CD4-positive, alpha-beta T cell (primary cell): ENCODE measurements at regions of chr5 and their contacts with region 1.

Region 1: DNA sequence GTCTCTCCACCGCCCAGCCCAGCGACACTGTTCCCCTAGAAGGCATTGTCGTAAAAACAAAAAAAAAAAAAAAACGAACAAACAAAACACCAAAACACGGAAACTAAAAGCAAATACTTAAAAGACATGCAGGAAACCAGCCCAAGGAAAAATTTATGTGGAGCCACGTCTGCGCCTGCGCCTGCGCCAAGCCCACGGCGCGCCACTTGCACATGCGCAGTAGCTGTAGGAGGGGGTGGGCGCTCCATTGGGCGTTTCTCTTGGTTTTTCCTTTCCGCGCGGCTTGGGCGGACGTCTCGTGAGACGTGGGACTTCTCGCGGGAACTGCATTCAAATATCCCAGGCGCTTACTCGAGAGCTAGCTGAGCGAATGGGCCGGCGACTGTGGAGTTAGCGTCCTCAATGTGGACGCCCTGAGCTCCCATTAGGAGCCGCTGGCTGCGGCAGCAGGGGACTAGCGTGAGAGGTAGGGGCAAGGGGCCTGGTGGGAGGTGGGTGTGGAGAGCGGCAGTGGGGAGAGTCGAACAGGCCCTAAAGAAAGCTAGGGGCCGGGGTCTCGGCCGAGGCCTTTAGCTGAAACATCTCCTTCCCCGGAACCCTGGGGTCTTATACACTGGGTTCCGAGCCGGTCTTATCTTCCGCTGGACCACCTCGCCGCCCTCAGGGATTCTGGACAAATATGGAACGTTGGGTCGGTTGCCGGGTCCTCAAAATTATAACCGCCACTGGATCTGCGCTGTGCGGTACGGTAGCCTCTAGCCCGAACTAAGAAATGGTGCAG is at the start of gene SPDL1:
- DNase-seq: peak; percentile 89 to 98 (median 91)
- ATAC-seq: peak; percentile 96
- H3K4me3 ChIP-seq: peak within 1 kb of the TSS; percentile 76
- H3K4me3 Mint-ChIP-seq: peak within 1 kb of the TSS; percentile 100
- H3K27ac ChIP-seq: peak within 1 kb of the TSS; percentile 43 to 65
- H3K27ac Mint-ChIP-seq: peak within 1 kb of the TSS; percentile 88
- H3K4me1 ChIP-seq: peaks cover 6% of the 10 kb centered on the region
- H3K4me1 Mint-ChIP-seq: peaks cover 47% of the 10 kb centered on the region
- H3K27me3 ChIP-seq: no peaks in the 10 kb centered on the region
- H3K27me3 Mint-ChIP-seq: no peaks in the 10 kb centered on the region
- CTCF ChIP-seq: no peak
- total RNA-seq, gene SPDL1: 4.3 to 5.6 TPM

Region 2: DNA sequence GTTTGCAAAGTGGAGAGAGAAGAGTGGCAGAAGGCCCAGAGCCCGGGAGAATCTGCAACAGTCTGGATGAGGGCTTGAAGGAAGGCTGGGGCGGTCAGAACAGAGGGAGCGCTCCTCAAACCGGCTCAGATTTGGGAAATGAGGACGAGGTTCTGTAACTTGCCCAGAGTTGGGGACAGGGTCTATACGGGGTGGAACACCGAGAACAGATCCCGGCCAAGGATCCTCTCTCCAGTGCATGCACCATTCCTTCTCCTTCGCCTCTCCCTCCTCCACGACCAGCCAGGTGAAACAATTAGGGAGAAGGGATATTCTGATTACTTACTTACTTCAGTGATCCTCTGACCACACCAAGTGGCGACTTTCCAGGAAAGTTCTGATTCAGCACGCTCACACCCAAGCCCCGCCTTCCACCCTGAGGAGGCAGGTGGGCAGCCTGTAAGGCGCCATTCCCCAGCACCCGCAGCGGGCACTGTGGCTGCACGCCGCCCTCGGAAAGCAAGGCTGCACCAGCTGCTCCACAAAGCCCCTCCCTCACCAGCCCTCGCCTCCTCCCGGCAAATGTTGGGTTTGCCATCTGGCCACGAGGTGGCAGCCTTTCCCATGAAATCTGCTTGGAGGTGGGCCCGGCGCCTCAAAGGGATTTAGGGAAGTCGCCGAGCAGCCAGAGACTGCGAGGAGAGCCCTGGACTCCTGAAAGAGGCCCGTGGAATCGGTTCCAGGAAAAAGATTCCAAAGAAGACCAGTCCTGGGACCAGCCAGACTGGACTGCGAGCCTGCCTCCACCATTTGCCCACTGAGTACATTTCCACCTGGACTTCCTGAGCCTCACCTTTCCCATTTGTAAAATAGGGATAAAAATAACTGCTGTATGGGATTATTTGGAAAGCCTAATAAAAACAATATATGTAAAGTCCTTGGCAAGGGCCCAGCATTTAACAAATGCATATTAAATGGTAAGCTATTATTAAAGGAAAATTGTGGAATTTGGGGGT is 1314.4 kb before region 1 on chr5:
- CTCF ChIA-PET with region 1: no interaction called
- POLR2A ChIA-PET with region 1: no interaction called
- intact Hi-C with region 1: loop called in 1 of 2 experiments (anchors 5 kb)
- DNase-seq: peak; percentile 36 to 84 (median 66)
- ATAC-seq: peak; percentile 83
- H3K4me3 ChIP-seq: peak overlapping the region; percentile 24
- H3K4me3 Mint-ChIP-seq: peak overlapping the region; percentile 55
- H3K27ac ChIP-seq: no peak overlapping the region
- H3K27ac Mint-ChIP-seq: no peak overlapping the region
- H3K4me1 ChIP-seq: peaks cover 9% of the 10 kb centered on the region
- H3K4me1 Mint-ChIP-seq: peaks cover 12% of the 10 kb centered on the region
- H3K27me3 ChIP-seq: peaks cover 2 to 5% of the 10 kb centered on the region in 2 experiments
- H3K27me3 Mint-ChIP-seq: peaks cover 22% of the 10 kb centered on the region
- CTCF ChIP-seq: peak; percentile 84

Region 3: GRCh38 chr5:168486136-168486879 is 1097.3 kb before region 1 on chr5 and contains the start of gene RARS1:
- CTCF ChIA-PET with region 1: no interaction called
- POLR2A ChIA-PET with region 1: no interaction called
- intact Hi-C with region 1: loop called in 1 of 2 experiments (anchors 5 kb)
- DNase-seq: peak; percentile 75 to 94 (median 83)
- ATAC-seq: peak; percentile 81
- H3K4me3 ChIP-seq: peak within 1 kb of the TSS; percentile 76
- H3K4me3 Mint-ChIP-seq: peak within 1 kb of the TSS; percentile 97
- H3K27ac ChIP-seq: peak within 1 kb of the TSS; percentile 54 to 64
- H3K27ac Mint-ChIP-seq: peak within 1 kb of the TSS; percentile 83
- H3K4me1 ChIP-seq: peaks cover 15% of the 10 kb centered on the region
- H3K4me1 Mint-ChIP-seq: peaks cover 39% of the 10 kb centered on the region
- H3K27me3 ChIP-seq: no peaks in the 10 kb centered on the region
- H3K27me3 Mint-ChIP-seq: no peaks in the 10 kb centered on the region
- CTCF ChIP-seq: peak; percentile 96
- total RNA-seq, gene RARS1: 67.0 to 67.7 TPM

Region 4: DNA sequence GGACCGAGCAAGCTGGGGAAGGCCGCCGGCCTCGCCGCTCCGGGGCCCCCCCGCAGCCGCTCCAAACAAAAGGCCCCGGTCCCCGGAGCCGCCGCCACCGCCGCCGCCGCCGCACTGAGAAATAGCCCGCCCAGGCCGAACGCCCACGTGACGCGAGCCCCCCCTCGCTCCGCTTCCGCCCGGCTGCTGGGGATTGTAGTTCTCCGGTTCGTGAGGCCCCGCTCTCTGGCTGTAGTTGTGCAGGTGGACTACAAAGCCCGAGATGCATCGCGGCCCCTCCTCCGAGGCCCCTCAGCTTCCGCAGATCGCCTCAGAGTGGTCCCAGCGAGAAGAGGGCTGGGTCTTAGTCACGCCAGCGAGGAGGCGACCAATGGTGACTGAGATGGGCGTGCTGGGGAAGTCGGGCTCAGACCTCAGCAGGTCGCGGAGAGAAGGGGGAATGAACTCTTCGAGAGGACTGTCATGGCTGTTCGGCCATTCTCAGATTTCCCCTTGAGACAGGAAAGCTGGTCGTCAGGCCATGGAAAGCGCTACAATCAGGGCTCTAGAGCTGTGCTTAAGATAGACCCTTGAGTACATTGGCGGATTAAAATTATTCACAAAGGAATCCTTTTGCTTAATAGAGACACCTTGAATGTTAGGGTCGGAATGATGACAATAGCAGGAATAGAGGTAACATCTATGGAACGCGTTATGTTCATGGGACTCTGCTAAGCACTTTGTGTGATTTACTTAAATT is 1004.0 kb before region 1 on chr5:
- CTCF ChIA-PET with region 1: no interaction called
- POLR2A ChIA-PET with region 1: interaction called, 7 read pairs
- intact Hi-C with region 1: loop called (anchors 5 to 10 kb)
- DNase-seq: peak; percentile 90 to 99 (median 95)
- ATAC-seq: peak; percentile 96
- H3K4me3 ChIP-seq: peak overlapping the region; percentile 92
- H3K4me3 Mint-ChIP-seq: peak overlapping the region; percentile 92
- H3K27ac ChIP-seq: peak overlapping the region; percentile 77 to 86
- H3K27ac Mint-ChIP-seq: peak overlapping the region; percentile 89
- H3K4me1 ChIP-seq: peaks cover 28% of the 10 kb centered on the region
- H3K4me1 Mint-ChIP-seq: peaks cover 44% of the 10 kb centered on the region
- H3K27me3 ChIP-seq: no peaks in the 10 kb centered on the region
- H3K27me3 Mint-ChIP-seq: peaks cover 5% of the 10 kb centered on the region
- CTCF ChIP-seq: no peak

Region 5: DNA sequence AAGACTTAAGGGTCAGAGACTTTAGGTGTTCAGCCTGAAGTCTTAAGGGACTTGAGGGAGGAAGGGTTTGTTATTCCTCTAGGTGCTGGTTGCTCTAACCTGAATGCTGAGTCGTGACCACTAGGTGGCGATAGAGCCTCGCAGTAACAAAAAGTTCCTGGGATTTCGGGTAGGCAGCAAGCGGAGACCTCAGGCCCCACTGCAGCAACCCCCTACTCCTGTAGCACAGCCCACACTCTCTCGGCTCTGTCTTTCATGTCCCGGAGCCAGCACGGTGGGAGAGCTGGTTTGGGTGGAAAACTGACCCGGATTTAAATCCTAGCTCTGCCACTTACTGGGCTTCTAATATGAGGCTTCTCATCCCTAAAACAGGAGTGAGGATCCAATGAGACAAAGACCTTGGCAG is 904.1 kb before region 1 on chr5:
- CTCF ChIA-PET with region 1: no interaction called
- POLR2A ChIA-PET with region 1: no interaction called
- intact Hi-C with region 1: loop called (anchors 2 kb)
- DNase-seq: peak; percentile 23 to 73 (median 48)
- ATAC-seq: no peak
- H3K4me3 ChIP-seq: no peak overlapping the region
- H3K4me3 Mint-ChIP-seq: no peak overlapping the region
- H3K27ac ChIP-seq: no peak overlapping the region
- H3K27ac Mint-ChIP-seq: no peak overlapping the region
- H3K4me1 ChIP-seq: peaks cover 12% of the 10 kb centered on the region
- H3K4me1 Mint-ChIP-seq: peaks cover 14% of the 10 kb centered on the region
- H3K27me3 ChIP-seq: no peaks in the 10 kb centered on the region
- H3K27me3 Mint-ChIP-seq: no peaks in the 10 kb centered on the region
- CTCF ChIP-seq: peak; percentile 87

Region 6: GRCh38 chr5:169595172-169595820 is 11.7 kb after region 1 on chr5:
- CTCF ChIA-PET with region 1: no interaction called
- POLR2A ChIA-PET with region 1: no interaction called
- intact Hi-C with region 1: no loop called
- DNase-seq: no peak
- ATAC-seq: no peak
- H3K4me3 ChIP-seq: no peak overlapping the region
- H3K4me3 Mint-ChIP-seq: no peak overlapping the region
- H3K27ac ChIP-seq: no peak overlapping the region
- H3K27ac Mint-ChIP-seq: no peak overlapping the region
- H3K4me1 ChIP-seq: no peaks in the 10 kb centered on the region
- H3K4me1 Mint-ChIP-seq: no peaks in the 10 kb centered on the region
- H3K27me3 ChIP-seq: no peaks in the 10 kb centered on the region
- H3K27me3 Mint-ChIP-seq: no peaks in the 10 kb centered on the region
- CTCF ChIP-seq: no peak

Region 7: GRCh38 chr5:169637085-169637548 is 53.5 kb after region 1 on chr5 and contains the start of gene DOCK2:
- CTCF ChIA-PET with region 1: interaction called, 3 read pairs
- POLR2A ChIA-PET with region 1: interaction called, 36 read pairs
- intact Hi-C with region 1: loop called (anchors 1 to 2 kb)
- DNase-seq: peak; percentile 26 to 80 (median 62)
- ATAC-seq: peak; percentile 75
- H3K4me3 ChIP-seq: peak within 1 kb of the TSS; percentile 89
- H3K4me3 Mint-ChIP-seq: peak within 1 kb of the TSS; percentile 95
- H3K27ac ChIP-seq: peak within 1 kb of the TSS; percentile 80 to 87
- H3K27ac Mint-ChIP-seq: peak within 1 kb of the TSS; percentile 97
- H3K4me1 ChIP-seq: peaks cover 47% of the 10 kb centered on the region
- H3K4me1 Mint-ChIP-seq: peaks cover 60% of the 10 kb centered on the region
- H3K27me3 ChIP-seq: no peaks in the 10 kb centered on the region
- H3K27me3 Mint-ChIP-seq: no peaks in the 10 kb centered on the region
- CTCF ChIP-seq: no peak
- total RNA-seq, gene DOCK2: 220 to 229 TPM

Region 8: GRCh38 chr5:169650701-169651331 is 67.2 kb after region 1 on chr5:
- CTCF ChIA-PET with region 1: no interaction called
- POLR2A ChIA-PET with region 1: interaction called, 3 read pairs
- intact Hi-C with region 1: loop called in 1 of 2 experiments (anchors 5 kb)
- DNase-seq: peak in 3 of 14 experiments; percentile 64 to 70 (median 68)
- ATAC-seq: peak; percentile 58
- H3K4me3 ChIP-seq: no peak overlapping the region
- H3K4me3 Mint-ChIP-seq: peak overlapping the region; percentile 72
- H3K27ac ChIP-seq: peak overlapping the region; percentile 17 to 73
- H3K27ac Mint-ChIP-seq: peak overlapping the region; percentile 81
- H3K4me1 ChIP-seq: peaks cover 86% of the 10 kb centered on the region
- H3K4me1 Mint-ChIP-seq: peaks cover 99% of the 10 kb centered on the region
- H3K27me3 ChIP-seq: no peaks in the 10 kb centered on the region
- H3K27me3 Mint-ChIP-seq: no peaks in the 10 kb centered on the region
- CTCF ChIP-seq: no peak

Region 9: GRCh38 chr5:169964246-169964645 is 380.6 kb after region 1 on chr5:
- CTCF ChIA-PET with region 1: no interaction called
- POLR2A ChIA-PET with region 1: no interaction called
- intact Hi-C with region 1: no loop called
- DNase-seq: no peak
- ATAC-seq: no peak
- H3K4me3 ChIP-seq: no peak overlapping the region
- H3K4me3 Mint-ChIP-seq: no peak overlapping the region
- H3K27ac ChIP-seq: no peak overlapping the region
- H3K27ac Mint-ChIP-seq: no peak overlapping the region
- H3K4me1 ChIP-seq: no peaks in the 10 kb centered on the region
- H3K4me1 Mint-ChIP-seq: peaks cover under 1% of the 10 kb centered on the region
- H3K27me3 ChIP-seq: no peaks in the 10 kb centered on the region
- H3K27me3 Mint-ChIP-seq: no peaks in the 10 kb centered on the region
- CTCF ChIP-seq: no peak